MCF 10A (cell line): ENCODE measurements at regions of chr1 and their contacts with region 1.

Region 1: GRCh38 chr1:181479137-181479745 is 4.1 kb upstream of the CACNA1E start:
- DNase-seq: peak; percentile 80
- H3K4me3 Mint-ChIP-seq: no peak overlapping the region
- H3K27ac Mint-ChIP-seq: no peak overlapping the region
- H3K4me1 Mint-ChIP-seq: no peaks in the 10 kb centered on the region
- H3K27me3 Mint-ChIP-seq: peaks cover 28% of the 10 kb centered on the region
- CTCF ChIP-seq: peak; percentile 97

Region 2: DNA sequence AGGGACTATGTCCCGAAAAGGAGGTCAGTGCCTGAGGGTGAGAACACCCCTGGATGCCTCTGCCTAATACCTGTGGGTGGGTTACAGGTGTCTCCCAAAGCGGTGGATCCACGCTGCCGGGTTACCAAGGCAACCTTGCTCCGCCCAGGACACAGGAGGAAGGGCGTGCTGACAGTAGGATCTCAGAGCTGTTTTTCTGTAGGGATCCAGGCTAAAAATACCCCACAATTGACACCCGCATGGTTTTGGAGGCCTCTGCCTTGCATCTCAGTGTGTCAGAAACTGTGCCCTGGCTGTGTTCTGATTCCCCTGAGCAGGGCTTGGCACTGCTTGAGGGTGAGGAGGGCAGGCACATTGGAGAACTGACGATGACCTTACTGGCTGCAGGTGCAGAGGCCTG is 272.7 kb before region 1 on chr1:
- CTCF ChIA-PET with region 1: no interaction called
- POLR2A ChIA-PET with region 1: no interaction called
- intact Hi-C with region 1: no loop called
- DNase-seq: no peak
- H3K4me3 Mint-ChIP-seq: no peak overlapping the region
- H3K27ac Mint-ChIP-seq: no peak overlapping the region
- H3K4me1 Mint-ChIP-seq: no peaks in the 10 kb centered on the region
- H3K27me3 Mint-ChIP-seq: no peaks in the 10 kb centered on the region
- CTCF ChIP-seq: no peak

Region 3: DNA sequence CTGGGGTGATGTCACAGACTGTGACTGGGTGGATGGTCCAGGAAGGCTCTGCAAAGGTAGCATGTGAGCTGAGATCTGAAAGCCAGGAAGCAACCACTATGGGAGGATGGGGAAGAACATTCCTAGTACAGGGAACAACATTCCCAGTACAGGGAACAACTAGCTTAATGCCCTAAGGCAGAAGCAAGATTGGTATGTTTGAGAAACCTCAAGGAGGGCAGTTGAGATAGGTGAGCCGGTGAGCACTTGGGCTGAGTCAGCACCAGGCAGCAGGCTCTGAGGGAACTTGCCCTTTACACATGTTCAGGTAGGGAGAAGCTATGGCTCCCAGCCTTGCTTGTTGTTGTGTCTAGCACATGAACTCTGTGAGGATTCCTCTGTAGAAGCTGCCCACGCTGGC is 20.2 kb before region 1 on chr1:
- CTCF ChIA-PET with region 1: interaction called, 83 read pairs
- POLR2A ChIA-PET with region 1: interaction called, 3 read pairs
- intact Hi-C with region 1: no loop called
- DNase-seq: peak; percentile 41
- H3K4me3 Mint-ChIP-seq: no peak overlapping the region
- H3K27ac Mint-ChIP-seq: no peak overlapping the region
- H3K4me1 Mint-ChIP-seq: no peaks in the 10 kb centered on the region
- H3K27me3 Mint-ChIP-seq: no peaks in the 10 kb centered on the region
- CTCF ChIP-seq: no peak

Region 4: DNA sequence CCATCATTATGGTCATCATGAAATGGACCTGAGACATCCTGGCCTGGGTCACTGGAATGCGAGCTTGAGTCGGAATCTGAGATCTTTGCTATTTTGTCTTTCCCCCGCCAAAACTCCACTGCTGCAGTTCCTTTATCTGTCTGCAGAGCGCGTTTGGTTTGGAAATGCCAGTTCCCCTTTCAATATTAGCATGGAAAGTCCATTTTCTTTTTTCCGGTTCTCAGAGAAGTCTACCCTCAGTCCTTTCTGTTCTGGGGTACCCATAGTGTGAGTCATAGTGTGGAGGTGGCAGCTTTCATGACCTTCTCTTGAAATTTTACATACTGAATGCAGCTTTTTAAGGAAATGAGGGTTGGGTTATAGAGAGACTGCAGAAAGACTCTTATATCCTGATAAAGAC is 18.6 kb after region 1 on chr1:
- CTCF ChIA-PET with region 1: interaction called, 91 read pairs
- POLR2A ChIA-PET with region 1: no interaction called
- intact Hi-C with region 1: no loop called
- DNase-seq: no peak
- H3K4me3 Mint-ChIP-seq: no peak overlapping the region
- H3K27ac Mint-ChIP-seq: no peak overlapping the region
- H3K4me1 Mint-ChIP-seq: peaks cover 6% of the 10 kb centered on the region
- H3K27me3 Mint-ChIP-seq: peaks cover 62% of the 10 kb centered on the region
- CTCF ChIP-seq: no peak

Region 5: GRCh38 chr1:181525104-181525721 is 46.0 kb after region 1 on chr1:
- CTCF ChIA-PET with region 1: no interaction called
- POLR2A ChIA-PET with region 1: no interaction called
- intact Hi-C with region 1: no loop called
- DNase-seq: no peak
- H3K4me3 Mint-ChIP-seq: no peak overlapping the region
- H3K27ac Mint-ChIP-seq: no peak overlapping the region
- H3K4me1 Mint-ChIP-seq: no peaks in the 10 kb centered on the region
- H3K27me3 Mint-ChIP-seq: no peaks in the 10 kb centered on the region
- CTCF ChIP-seq: no peak

Region 6: DNA sequence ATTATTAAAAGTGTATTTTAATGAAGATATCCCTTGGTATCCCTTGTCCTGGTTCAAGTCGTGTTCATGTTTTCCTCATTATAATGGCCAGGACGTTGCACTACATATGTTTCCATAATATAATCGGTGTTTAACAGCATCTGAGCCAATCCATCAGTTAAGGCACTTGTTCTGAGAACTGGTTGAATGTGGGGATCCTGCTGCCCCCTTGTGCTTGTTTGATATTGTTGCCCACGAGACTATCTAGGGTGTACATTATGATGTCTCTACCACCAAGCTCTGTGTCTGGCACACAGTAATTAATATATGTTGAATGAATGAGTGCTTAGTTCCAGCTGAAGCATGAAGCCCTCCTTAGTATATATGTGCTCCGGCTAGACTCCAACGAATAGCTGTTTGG is 197.0 kb after region 1 on chr1:
- CTCF ChIA-PET with region 1: interaction called, 103 read pairs
- POLR2A ChIA-PET with region 1: no interaction called
- intact Hi-C with region 1: loop called (anchors 1 kb)
- DNase-seq: peak; percentile 77
- H3K4me3 Mint-ChIP-seq: no peak overlapping the region
- H3K27ac Mint-ChIP-seq: no peak overlapping the region
- H3K4me1 Mint-ChIP-seq: no peaks in the 10 kb centered on the region
- H3K27me3 Mint-ChIP-seq: peaks cover 12% of the 10 kb centered on the region
- CTCF ChIP-seq: peak; percentile 75

Region 7: DNA sequence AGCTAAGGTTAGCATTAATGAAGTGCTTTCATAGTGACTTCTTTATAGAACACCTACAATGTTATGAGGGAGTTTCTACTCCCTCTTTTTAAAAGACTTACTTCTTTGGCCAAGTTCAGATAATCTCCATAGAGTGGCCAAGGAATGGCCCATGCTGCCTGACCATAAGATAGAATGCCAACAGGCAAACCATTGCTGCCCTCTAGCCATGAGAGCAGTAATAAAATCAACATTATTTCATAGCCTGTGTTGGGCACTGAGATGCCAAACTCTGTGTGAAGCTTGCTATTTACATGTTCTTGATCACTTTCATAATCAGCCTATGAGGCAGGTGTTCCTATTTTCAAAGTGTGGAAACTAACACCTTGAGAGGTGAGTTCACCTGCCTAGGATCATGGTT is 450.1 kb after region 1 on chr1:
- CTCF ChIA-PET with region 1: interaction called, 410 read pairs
- POLR2A ChIA-PET with region 1: no interaction called
- intact Hi-C with region 1: no loop called
- DNase-seq: peak; percentile 16
- H3K4me3 Mint-ChIP-seq: no peak overlapping the region
- H3K27ac Mint-ChIP-seq: no peak overlapping the region
- H3K4me1 Mint-ChIP-seq: no peaks in the 10 kb centered on the region
- H3K27me3 Mint-ChIP-seq: peaks cover 26% of the 10 kb centered on the region
- CTCF ChIP-seq: no peak

Region 8: DNA sequence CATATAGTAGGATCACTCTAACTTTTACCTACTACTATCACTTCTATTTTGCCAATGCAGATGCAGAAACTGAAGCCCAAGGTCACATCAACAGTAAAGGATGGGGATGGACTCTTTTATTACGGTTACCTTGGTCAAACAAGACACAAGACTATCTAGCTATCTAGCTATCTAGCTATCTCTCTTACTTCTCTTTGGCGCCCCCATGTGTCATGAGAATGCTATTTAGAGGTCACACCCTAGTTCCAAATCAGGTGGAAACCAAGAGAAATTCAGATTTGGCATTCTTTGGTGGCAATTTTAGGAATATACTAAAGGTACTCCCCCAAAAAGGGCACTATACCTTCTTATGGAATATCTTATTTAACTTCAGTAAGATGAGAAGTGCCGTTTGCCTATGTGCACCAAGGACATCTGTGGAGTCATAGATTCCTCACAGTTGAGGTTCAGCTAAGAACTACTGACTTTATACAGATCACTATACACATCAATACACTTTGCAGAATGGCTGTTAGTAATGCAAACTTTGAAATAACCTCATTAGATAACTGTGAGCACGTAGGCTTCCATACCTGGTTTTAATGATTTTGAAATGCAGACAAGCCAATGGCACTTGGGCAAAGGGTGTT is 575.6 kb after region 1 on chr1:
- CTCF ChIA-PET with region 1: interaction called, 72 read pairs
- POLR2A ChIA-PET with region 1: no interaction called
- intact Hi-C with region 1: loop called (anchors 1 kb)
- DNase-seq: peak; percentile 87
- H3K4me3 Mint-ChIP-seq: no peak overlapping the region
- H3K27ac Mint-ChIP-seq: no peak overlapping the region
- H3K4me1 Mint-ChIP-seq: peaks cover 6% of the 10 kb centered on the region
- H3K27me3 Mint-ChIP-seq: no peaks in the 10 kb centered on the region
- CTCF ChIP-seq: peak; percentile 73

Region 9: GRCh38 chr1:182069028-182069466 is 589.8 kb after region 1 on chr1:
- CTCF ChIA-PET with region 1: interaction called, 18 read pairs
- POLR2A ChIA-PET with region 1: no interaction called
- intact Hi-C with region 1: no loop called
- DNase-seq: peak; percentile 81
- H3K4me3 Mint-ChIP-seq: no peak overlapping the region
- H3K27ac Mint-ChIP-seq: no peak overlapping the region
- H3K4me1 Mint-ChIP-seq: no peaks in the 10 kb centered on the region
- H3K27me3 Mint-ChIP-seq: no peaks in the 10 kb centered on the region
- CTCF ChIP-seq: peak; percentile 94